ENCODE measurements at regions of chr16 and their contacts with region 1.

Region 1: DNA sequence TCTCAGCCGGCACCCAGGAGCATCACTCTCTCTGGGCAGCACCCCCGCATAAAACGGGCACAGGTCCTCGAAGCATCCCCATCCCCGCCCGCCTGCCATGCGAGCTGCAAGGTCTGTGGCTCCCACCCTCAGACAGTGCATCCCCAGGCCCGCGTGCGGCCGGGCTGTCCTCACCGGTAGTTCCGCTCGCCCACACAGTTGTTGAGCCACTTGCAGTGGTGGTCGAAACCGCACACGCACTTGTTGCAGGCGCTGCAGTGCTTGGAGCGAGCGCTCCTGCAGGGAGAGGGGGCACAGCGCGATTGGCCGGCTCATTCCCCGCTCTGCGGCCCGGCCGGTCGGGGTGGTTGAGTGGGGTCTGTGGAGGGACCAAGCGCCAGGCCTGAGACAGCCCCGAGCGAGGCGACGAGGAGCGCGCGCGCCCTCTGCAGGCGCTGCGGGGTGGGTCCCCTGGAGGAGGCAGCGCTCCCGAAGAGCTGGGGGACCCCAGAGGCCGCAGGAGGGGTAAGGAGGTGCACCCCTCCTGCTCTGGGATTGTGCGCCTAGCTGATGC is 6.0 kb upstream of the TPPP3 start:
- DNase-seq: peak; percentile 78
- ATAC-seq: peak; percentile 91
- H3K4me3 Mint-ChIP-seq: no peak overlapping the region
- H3K27ac Mint-ChIP-seq: no peak overlapping the region
- H3K4me1 Mint-ChIP-seq: peaks cover under 1% of the 10 kb centered on the region
- H3K27me3 Mint-ChIP-seq: peaks cover 21% of the 10 kb centered on the region

Region 2: GRCh38 chr16:67349172-67349571 is 50.1 kb before region 1 on chr16:
- CTCF ChIA-PET with region 1: interaction called, 7 read pairs
- POLR2A ChIA-PET with region 1: no interaction called
- intact Hi-C with region 1: loop called (anchors 1 kb)
- DNase-seq: no peak
- ATAC-seq: peak; percentile 55
- H3K4me3 Mint-ChIP-seq: no peak overlapping the region
- H3K27ac Mint-ChIP-seq: no peak overlapping the region
- H3K4me1 Mint-ChIP-seq: peaks cover 2% of the 10 kb centered on the region
- H3K27me3 Mint-ChIP-seq: peaks cover 2% of the 10 kb centered on the region

Region 3: DNA sequence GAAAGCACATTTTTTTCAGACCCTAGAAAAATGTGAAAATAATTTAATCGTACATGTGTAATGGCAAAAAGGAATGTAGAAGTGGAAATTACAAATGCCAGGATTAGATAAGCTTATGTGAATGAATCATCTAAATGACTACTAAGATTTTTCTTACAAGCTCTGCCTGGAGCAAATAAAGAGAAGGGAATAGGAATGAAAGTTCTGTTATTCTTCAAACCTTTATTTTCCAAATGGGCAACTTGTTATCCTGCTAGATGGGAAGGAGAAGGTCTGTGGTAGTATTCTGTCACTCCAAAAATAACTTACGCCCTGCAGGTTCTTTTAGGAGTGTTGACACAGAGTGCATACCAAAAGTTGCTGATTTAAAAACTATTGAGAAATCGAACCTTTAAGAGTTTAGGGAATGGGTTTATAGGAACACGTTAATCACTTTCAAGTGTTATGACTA is 172.7 kb after region 1 on chr16:
- CTCF ChIA-PET with region 1: no interaction called
- POLR2A ChIA-PET with region 1: no interaction called
- intact Hi-C with region 1: no loop called
- DNase-seq: no peak
- ATAC-seq: no peak
- H3K4me3 Mint-ChIP-seq: no peak overlapping the region
- H3K27ac Mint-ChIP-seq: no peak overlapping the region
- H3K4me1 Mint-ChIP-seq: peaks cover 11% of the 10 kb centered on the region
- H3K27me3 Mint-ChIP-seq: no peaks in the 10 kb centered on the region

Measured in activated CD4-positive, alpha-beta T cell treated with anti-CD3 and anti-CD28 coated beads for 36 hours (primary cell).